Vagina (tissue), 2 donors: ENCODE measurements at regions of chr17 and their contacts with region 1.

Region 1: GRCh38 chr17:1365445-1366039 is 34.5 kb downstream of the YWHAE start:
- DNase-seq: no peak
- H3K4me3 ChIP-seq: no peak overlapping the region
- H3K27ac ChIP-seq: peak overlapping the region; percentile 34
- H3K4me1 ChIP-seq: peaks cover 90% of the 10 kb centered on the region
- H3K27me3 ChIP-seq: no peaks in the 10 kb centered on the region
- CTCF ChIP-seq: peak; percentile 64 to 83 (median 78)
- POLR2A ChIP-seq: no peak

Region 2: GRCh38 chr17:1379930-1380313 is 14.4 kb after region 1 on chr17:
- intact Hi-C with region 1: loop called (anchors 1 kb)
- DNase-seq: no peak
- H3K4me3 ChIP-seq: no peak overlapping the region
- H3K27ac ChIP-seq: peak overlapping the region; percentile 19
- H3K4me1 ChIP-seq: peaks cover 97% of the 10 kb centered on the region
- H3K27me3 ChIP-seq: no peaks in the 10 kb centered on the region
- CTCF ChIP-seq: no peak
- POLR2A ChIP-seq: no peak

Region 3: GRCh38 chr17:1516388-1517161 is 151.0 kb after region 1 on chr17 and contains the start of gene INPP5K:
- intact Hi-C with region 1: loop called (anchors 2 kb)
- DNase-seq: peak in 1 of 2 donors; percentile 99
- H3K4me3 ChIP-seq: peak within 1 kb of the TSS; percentile 85 to 89
- H3K27ac ChIP-seq: peak within 1 kb of the TSS; percentile 93
- H3K4me1 ChIP-seq: peaks cover 56% of the 10 kb centered on the region
- H3K27me3 ChIP-seq: no peaks in the 10 kb centered on the region
- CTCF ChIP-seq: peak in 2 of 3 experiments; percentile 17 to 23
- POLR2A ChIP-seq: peak in 1 of 2 donors; percentile 42
- total RNA-seq, gene INPP5K: 96.0 TPM

Region 4: GRCh38 chr17:1703063-1703462 is 337.5 kb after region 1 on chr17:
- intact Hi-C with region 1: no loop called
- DNase-seq: no peak
- H3K4me3 ChIP-seq: no peak overlapping the region
- H3K27ac ChIP-seq: no peak overlapping the region
- H3K4me1 ChIP-seq: no peaks in the 10 kb centered on the region
- H3K27me3 ChIP-seq: no peaks in the 10 kb centered on the region
- CTCF ChIP-seq: no peak
- POLR2A ChIP-seq: no peak